Activated CD4-positive, alpha-beta memory T cell treated with anti-CD3 and anti-CD28 coated beads, Interleukin-2, amount 10 ng/mL, durations not matched to agents 7 days and 5 days (primary cell): ENCODE measurements at regions of chr15 and their contacts with region 1.

Region 1: GRCh38 chr15:92714477-92715401 is 59.2 kb upstream of the FAM174B start:
- DNase-seq: peak; percentile 72
- H3K4me3 Mint-ChIP-seq: peak overlapping the region; percentile 30
- H3K27ac Mint-ChIP-seq: no peak overlapping the region
- H3K4me1 Mint-ChIP-seq: peaks cover 8% of the 10 kb centered on the region
- H3K27me3 Mint-ChIP-seq: peaks cover 26% of the 10 kb centered on the region

Region 2: GRCh38 chr15:92521624-92522008 is 193.1 kb before region 1 on chr15:
- CTCF ChIA-PET with region 1: interaction called, 45 read pairs
- POLR2A ChIA-PET with region 1: interaction called, 3 read pairs
- DNase-seq: peak; percentile 59
- H3K4me3 Mint-ChIP-seq: no peak overlapping the region
- H3K27ac Mint-ChIP-seq: no peak overlapping the region
- H3K4me1 Mint-ChIP-seq: peaks cover 7% of the 10 kb centered on the region
- H3K27me3 Mint-ChIP-seq: peaks cover 2% of the 10 kb centered on the region

Region 3: DNA sequence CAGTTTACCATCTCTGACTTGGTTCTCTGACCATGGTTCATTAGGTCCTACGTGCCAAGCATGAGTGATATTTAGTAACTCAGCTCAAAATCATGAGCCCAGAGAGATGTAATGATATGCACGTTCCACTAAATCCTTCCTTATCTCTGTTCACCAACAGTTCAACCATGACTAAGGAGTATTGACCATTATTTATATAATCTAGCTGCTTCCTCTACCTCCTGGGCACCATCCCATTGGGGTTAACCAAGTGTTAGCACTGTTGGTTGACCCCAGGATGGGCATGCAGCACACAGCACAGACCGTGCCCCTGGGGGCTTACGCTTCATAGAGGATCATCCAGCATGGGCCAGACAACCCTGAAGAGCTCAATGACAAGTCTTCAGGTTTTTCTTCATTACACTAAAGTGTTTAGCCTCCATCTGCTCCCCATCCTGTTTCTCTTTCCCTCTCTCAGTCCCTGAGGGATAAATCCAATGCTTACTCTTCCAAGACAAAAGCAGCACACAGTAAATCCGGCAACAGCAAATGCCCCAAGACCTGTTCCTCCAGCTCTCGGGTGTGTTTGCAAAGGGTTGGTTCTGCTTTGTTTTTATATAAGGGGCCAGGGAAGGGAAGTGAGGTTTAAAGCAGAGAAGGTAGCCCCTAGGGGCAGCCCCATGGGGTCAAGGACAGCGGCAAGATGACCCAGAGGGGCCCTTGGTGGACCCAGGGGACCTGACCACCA is 69.5 kb before region 1 on chr15:
- CTCF ChIA-PET with region 1: no interaction called
- POLR2A ChIA-PET with region 1: no interaction called
- DNase-seq: no peak
- H3K4me3 Mint-ChIP-seq: no peak overlapping the region
- H3K27ac Mint-ChIP-seq: no peak overlapping the region
- H3K4me1 Mint-ChIP-seq: no peaks in the 10 kb centered on the region
- H3K27me3 Mint-ChIP-seq: peaks cover 10% of the 10 kb centered on the region

Region 4: GRCh38 chr15:92733934-92734521 is 19.3 kb after region 1 on chr15:
- CTCF ChIA-PET with region 1: no interaction called
- POLR2A ChIA-PET with region 1: no interaction called
- DNase-seq: no peak
- H3K4me3 Mint-ChIP-seq: peak overlapping the region; percentile 66
- H3K27ac Mint-ChIP-seq: no peak overlapping the region
- H3K4me1 Mint-ChIP-seq: peaks cover 5% of the 10 kb centered on the region
- H3K27me3 Mint-ChIP-seq: peaks cover 26% of the 10 kb centered on the region